ENCODE measurements at regions of chr13 and their contacts with region 1.

Region 1: DNA sequence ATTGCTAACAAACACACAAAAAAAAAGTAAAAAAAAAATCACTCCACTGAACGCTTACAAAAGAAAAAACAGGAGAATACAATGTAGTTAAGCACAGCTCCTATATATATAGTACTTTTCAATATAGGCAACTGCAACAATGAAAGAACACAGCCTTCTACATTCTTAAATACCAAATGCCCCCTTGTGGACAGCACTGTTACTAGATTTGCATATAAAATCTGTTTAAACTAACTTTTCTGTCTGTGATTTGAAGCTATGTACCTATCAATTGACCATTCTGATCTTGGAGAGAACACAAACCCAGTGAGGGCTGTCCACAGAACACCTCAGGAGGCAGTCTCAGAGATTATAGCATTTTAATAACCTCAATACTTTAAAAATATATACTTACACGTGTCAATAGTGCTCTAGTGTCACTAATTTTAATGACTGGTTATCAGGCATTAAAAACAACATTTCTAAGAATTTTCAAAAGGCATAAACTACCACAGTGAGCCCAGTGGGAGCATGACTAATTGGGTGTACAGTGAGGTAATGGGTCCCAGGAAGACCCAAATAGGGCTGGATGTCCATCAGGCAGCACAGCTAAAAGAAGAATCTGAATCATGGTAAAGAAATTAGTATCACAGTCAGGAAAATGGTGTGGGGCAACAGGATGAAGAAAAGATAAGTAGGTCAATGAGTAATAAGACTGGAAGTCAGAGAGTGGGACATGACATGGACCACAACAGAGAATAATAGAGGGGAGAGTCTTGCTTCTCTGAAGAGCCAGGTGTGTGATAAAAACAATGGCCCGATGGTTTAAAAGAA is 22.2 kb downstream of the CCDC169 start:
- DNase-seq: peak; percentile 36

Region 2: DNA sequence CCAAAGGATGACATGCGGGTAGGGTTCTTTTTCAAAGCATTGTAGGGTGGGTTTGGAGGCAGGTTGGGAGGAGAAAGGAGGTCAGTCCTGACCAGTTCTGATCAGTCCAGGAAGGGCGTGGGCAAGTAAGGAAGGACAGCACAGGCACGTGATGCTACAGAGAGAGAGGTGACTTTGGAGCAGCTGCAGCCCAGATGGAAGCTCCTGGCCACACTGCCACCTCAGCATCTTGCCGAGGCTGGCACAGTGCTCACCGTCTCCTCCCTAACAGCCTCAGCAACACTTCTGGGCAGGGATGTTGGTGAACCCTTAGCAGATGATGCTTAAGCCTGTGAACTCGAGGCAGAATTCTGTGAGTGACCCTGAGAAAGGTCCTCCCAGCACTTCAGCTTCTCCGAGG is 299.3 kb before region 1 on chr13:
- CTCF ChIA-PET with region 1: interaction called, 16 read pairs
- POLR2A ChIA-PET with region 1: no interaction called
- DNase-seq: no peak

Measured in HEK293T (cell line).